Sigmoid colon (tissue), 7 donors: ENCODE measurements at regions of chr9 and their contacts with region 1.

Region 1: GRCh38 chr9:93302551-93303257 is 118.8 kb downstream of the WNK2 start:
- DNase-seq: peak; percentile 68
- H3K4me3 ChIP-seq: no peak overlapping the region
- H3K27ac ChIP-seq: peak overlapping the region in 1 of 4 donors; percentile 13
- H3K4me1 ChIP-seq: peaks cover 0 to 30% (median 25%) of the 10 kb centered on the region in 4 donors
- H3K27me3 ChIP-seq: no peaks in the 10 kb centered on the region
- CTCF ChIP-seq: peak in 2 of 4 experiments; percentile 34 to 46
- EP300 ChIP-seq: no peak
- POLR2A ChIP-seq: no peak

Region 2: GRCh38 chr9:93159601-93160471 is 142.9 kb before region 1 on chr9:
- intact Hi-C with region 1: loop called (anchors 1 kb)
- DNase-seq: peak; percentile 89
- H3K4me3 ChIP-seq: no peak overlapping the region
- H3K27ac ChIP-seq: no peak overlapping the region
- H3K4me1 ChIP-seq: peaks cover 0 to 31% (median 10%) of the 10 kb centered on the region in 4 donors
- H3K27me3 ChIP-seq: no peaks in the 10 kb centered on the region
- CTCF ChIP-seq: peak; percentile 92 to 98 (median 97)
- EP300 ChIP-seq: no peak
- POLR2A ChIP-seq: no peak

Region 3: GRCh38 chr9:93288891-93289883 is 13.5 kb before region 1 on chr9:
- intact Hi-C with region 1: loop called (anchors 1 kb)
- DNase-seq: no peak
- H3K4me3 ChIP-seq: no peak overlapping the region
- H3K27ac ChIP-seq: no peak overlapping the region
- H3K4me1 ChIP-seq: no peaks in the 10 kb centered on the region
- H3K27me3 ChIP-seq: no peaks in the 10 kb centered on the region
- CTCF ChIP-seq: no peak
- EP300 ChIP-seq: no peak
- POLR2A ChIP-seq: no peak

Region 4: GRCh38 chr9:93566408-93567270 is 263.9 kb after region 1 on chr9:
- intact Hi-C with region 1: loop called (anchors 5 kb)
- DNase-seq: peak; percentile 98
- H3K4me3 ChIP-seq: peak overlapping the region; percentile 47 to 57 (median 54)
- H3K27ac ChIP-seq: peak overlapping the region; percentile 88 to 95 (median 92)
- H3K4me1 ChIP-seq: peaks cover 0 to 17% (median 14%) of the 10 kb centered on the region in 4 donors
- H3K27me3 ChIP-seq: no peaks in the 10 kb centered on the region
- CTCF ChIP-seq: peak; percentile 79 to 86 (median 83)
- EP300 ChIP-seq: no peak
- POLR2A ChIP-seq: peak; percentile 90 to 92